ENCODE measurements at regions of chr19 and their contacts with region 1.

Region 1: DNA sequence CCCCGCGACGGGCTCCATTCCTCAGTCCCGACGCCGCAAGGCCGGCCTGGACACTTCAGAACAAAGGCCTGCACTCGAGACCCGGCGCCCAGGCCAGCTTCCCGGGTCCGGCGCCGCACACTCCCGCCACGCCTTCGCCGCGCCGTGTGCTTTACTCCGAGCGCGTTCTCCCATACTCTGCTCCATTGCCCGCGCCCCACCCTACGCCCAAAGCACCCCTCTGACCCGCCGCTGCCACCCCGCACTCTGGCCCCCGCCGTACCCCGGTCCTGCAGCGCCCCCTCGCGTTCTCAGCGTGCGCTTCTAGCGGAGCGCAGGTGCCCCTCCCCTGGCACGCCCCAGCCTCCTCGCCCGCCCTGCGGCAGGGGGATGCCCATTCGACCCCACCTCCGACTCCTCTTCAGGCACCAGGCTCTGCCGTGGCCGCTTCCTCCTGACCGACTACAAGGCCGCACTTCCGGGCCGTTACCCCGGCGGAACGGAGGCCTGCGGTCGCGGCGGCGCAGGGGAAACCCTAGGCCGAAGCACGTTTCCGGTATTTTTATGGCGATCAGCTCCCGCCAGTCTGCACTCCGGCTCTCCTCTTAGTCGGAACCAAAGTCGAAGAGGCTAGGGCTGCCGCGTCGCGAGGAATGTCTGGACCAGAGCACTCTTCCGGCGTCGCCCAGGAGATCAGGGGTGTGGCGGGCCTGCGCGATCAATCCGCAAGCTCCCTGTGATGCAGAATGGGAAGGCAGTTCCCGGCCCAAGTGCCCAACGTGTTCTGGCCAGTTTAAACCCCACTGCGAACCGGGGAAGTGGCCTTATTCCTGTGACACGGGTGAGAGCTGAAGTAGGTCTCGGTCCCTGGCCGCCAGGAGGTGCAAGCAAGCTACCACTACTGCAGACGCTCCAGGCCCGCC is at the start of gene ZBTB45:
- DNase-seq: peak; percentile 93
- ATAC-seq: peak; percentile 88
- H3K4me3 Mint-ChIP-seq: peak within 1 kb of the TSS; percentile 96
- H3K27ac Mint-ChIP-seq: peak within 1 kb of the TSS; percentile 97
- H3K4me1 Mint-ChIP-seq: peaks cover 41% of the 10 kb centered on the region
- H3K27me3 Mint-ChIP-seq: no peaks in the 10 kb centered on the region
- total RNA-seq, gene ZBTB45: 13.9 to 16.7 TPM

Region 2: GRCh38 chr19:58362272-58362994 is 157.2 kb before region 1 on chr19 and contains the start of gene ZNF497:
- CTCF ChIA-PET with region 1: interaction called, 16 read pairs
- POLR2A ChIA-PET with region 1: no interaction called
- DNase-seq: peak; percentile 98
- ATAC-seq: peak; percentile 90
- H3K4me3 Mint-ChIP-seq: peak within 1 kb of the TSS; percentile 80
- H3K27ac Mint-ChIP-seq: peak within 1 kb of the TSS; percentile 88
- H3K4me1 Mint-ChIP-seq: peaks cover 23% of the 10 kb centered on the region
- H3K27me3 Mint-ChIP-seq: no peaks in the 10 kb centered on the region
- total RNA-seq, gene ZNF497: 1.5 to 1.7 TPM

Region 3: GRCh38 chr19:58499021-58499927 is 20.3 kb before region 1 on chr19:
- CTCF ChIA-PET with region 1: interaction called, 24 read pairs
- POLR2A ChIA-PET with region 1: interaction called, 11 read pairs
- DNase-seq: peak; percentile 99
- ATAC-seq: peak; percentile 97
- H3K4me3 Mint-ChIP-seq: peak overlapping the region; percentile 85
- H3K27ac Mint-ChIP-seq: peak overlapping the region; percentile 88
- H3K4me1 Mint-ChIP-seq: peaks cover 31% of the 10 kb centered on the region
- H3K27me3 Mint-ChIP-seq: no peaks in the 10 kb centered on the region

Region 4: DNA sequence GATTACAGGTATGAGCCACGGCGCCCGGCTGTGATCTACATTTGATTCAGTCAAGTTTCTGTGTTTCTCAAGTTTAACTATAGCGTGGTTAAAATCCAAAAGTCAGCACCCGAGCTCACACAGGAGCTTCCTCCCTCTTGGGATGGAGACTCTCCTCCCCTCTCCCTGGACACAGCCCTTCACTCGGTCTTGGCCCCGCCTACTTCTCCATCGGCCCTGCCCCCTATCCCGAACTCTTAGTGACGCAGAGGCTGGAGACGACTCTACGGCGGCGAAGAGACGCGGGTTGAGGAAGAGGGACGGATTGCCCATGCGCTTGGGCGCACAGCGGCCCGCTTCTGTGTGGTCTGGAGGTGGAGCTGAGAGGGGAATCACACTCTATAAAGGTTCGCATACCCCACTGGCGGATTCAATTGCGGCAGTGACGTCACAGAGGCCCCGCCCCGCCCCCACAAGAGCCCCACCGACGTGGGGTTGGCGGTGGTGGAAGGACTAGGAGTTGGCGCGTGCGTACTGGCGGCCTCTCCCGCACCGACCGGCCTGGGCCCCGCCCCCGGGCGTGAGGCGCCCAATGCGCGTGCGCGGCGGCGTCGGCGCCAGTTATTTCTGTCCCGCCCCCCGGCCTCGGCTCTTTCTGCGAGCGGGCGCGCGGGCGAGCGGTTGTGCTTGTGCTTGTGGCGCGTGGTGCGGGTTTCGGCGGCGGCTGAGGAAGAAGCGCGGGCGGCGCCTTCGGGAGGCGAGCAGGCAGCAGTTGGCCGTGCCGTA is 24.4 kb after region 1 on chr19 and contains the start of gene TRIM28:
- CTCF ChIA-PET with region 1: interaction called, 49 read pairs
- POLR2A ChIA-PET with region 1: interaction called, 28 read pairs
- DNase-seq: peak; percentile 100
- ATAC-seq: peak; percentile 94
- H3K4me3 Mint-ChIP-seq: peak within 1 kb of the TSS; percentile 97
- H3K27ac Mint-ChIP-seq: peak within 1 kb of the TSS; percentile 96
- H3K4me1 Mint-ChIP-seq: peaks cover 35% of the 10 kb centered on the region
- H3K27me3 Mint-ChIP-seq: peaks cover 18% of the 10 kb centered on the region
- total RNA-seq, gene TRIM28: 476 to 528 TPM

Region 5: GRCh38 chr19:58572818-58573657 is 53.4 kb after region 1 on chr19 and contains the start of gene MZF1:
- CTCF ChIA-PET with region 1: interaction called, 94 read pairs
- POLR2A ChIA-PET with region 1: interaction called, 18 read pairs
- DNase-seq: peak; percentile 100
- ATAC-seq: peak; percentile 62
- H3K4me3 Mint-ChIP-seq: peak within 1 kb of the TSS; percentile 86
- H3K27ac Mint-ChIP-seq: peak within 1 kb of the TSS; percentile 99
- H3K4me1 Mint-ChIP-seq: peaks cover 43% of the 10 kb centered on the region
- H3K27me3 Mint-ChIP-seq: no peaks in the 10 kb centered on the region
- total RNA-seq, gene MZF1: 20.0 to 20.6 TPM

Measured in activated CD8-positive, alpha-beta T cell treated with anti-CD3 and anti-CD28 coated beads, Interleukin-2, amount 10 ng/mL, durations not matched to agents 7 days and 5 days (primary cell).